ENCODE measurements at regions of chr16 and their contacts with region 1.

Region 1: DNA sequence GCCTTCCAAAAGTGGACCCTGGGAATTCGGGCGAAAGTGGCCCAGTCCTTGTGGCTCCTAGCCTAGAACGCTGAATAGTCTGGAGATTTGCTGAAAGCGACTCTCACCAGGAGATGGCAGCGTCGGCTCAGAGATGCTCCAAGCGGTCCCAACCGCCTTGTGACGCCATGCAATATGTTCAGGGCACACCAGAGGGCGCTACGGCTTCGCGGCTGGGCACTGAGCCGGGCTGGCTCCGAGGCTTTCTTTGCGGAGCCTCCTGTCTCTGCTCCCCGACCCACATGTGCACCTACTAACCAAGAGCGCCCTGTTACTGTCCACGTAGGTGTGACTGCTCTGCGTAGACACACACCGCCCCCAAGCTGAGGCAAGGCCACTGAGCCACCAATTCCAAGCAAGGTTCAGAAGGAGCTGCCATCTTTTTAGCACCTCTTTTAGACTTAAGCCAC is 36.9 kb downstream of the SYCE1L start:
- DNase-seq: peak; percentile 83 to 88
- H3K4me3 ChIP-seq: no peak overlapping the region
- H3K27ac ChIP-seq: no peak overlapping the region
- H3K4me1 ChIP-seq: peaks cover 0 to 3% of the 10 kb centered on the region in 2 donors
- H3K27me3 ChIP-seq: no peaks in the 10 kb centered on the region
- CTCF ChIP-seq: peak; percentile 98 to 100 (median 100)
- POLR2A ChIP-seq: no peak

Region 2: DNA sequence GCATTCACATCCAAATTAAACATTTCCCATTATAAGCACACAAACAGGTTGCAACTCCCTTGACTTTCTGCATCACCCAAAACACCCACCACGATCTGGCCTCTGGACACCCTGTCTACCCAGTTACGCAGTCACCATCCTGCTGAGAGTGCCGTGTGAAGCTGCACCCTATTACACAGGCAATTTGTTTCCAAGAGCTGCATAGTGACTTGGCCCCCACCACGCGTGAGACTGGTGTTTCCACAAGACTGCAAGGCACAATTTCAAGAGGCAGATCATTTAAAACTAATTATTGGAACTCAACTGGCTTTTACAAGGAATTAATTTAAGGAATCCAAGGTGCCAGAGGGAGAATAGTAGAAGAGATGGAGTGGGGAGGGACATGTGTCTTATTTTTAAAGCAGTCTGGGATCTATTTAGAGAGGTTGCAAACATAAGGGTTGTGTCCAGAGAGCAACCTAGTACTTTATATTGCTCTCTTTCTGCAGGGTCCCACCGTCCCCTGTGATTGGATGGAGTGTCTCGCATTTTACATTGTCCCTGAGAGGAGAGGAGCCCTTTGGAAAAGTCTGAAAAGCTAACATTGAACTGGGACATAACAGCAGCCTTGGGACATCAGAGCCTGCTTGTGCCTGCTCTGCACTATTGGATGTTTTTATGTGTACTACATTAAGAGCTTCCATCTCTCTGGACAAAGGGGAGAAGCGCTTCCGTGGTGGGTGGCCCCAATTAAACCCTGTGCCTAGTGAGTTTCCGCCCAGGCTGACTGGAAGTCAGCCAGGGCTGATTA is 207.5 kb after region 1 on chr16:
- intact Hi-C with region 1: loop called (anchors 10 kb)
- DNase-seq: no peak
- H3K4me3 ChIP-seq: no peak overlapping the region
- H3K27ac ChIP-seq: no peak overlapping the region
- H3K4me1 ChIP-seq: no peaks in the 10 kb centered on the region
- H3K27me3 ChIP-seq: no peaks in the 10 kb centered on the region
- CTCF ChIP-seq: no peak
- POLR2A ChIP-seq: no peak

Region 3: GRCh38 chr16:77584205-77584859 is 348.2 kb after region 1 on chr16:
- intact Hi-C with region 1: loop called (anchors 2 kb)
- DNase-seq: peak; percentile 48 to 53
- H3K4me3 ChIP-seq: no peak overlapping the region
- H3K27ac ChIP-seq: no peak overlapping the region
- H3K4me1 ChIP-seq: peaks cover 11 to 12% of the 10 kb centered on the region in 2 donors
- H3K27me3 ChIP-seq: no peaks in the 10 kb centered on the region
- CTCF ChIP-seq: peak; percentile 50 to 98 (median 88)
- POLR2A ChIP-seq: no peak

Region 4: DNA sequence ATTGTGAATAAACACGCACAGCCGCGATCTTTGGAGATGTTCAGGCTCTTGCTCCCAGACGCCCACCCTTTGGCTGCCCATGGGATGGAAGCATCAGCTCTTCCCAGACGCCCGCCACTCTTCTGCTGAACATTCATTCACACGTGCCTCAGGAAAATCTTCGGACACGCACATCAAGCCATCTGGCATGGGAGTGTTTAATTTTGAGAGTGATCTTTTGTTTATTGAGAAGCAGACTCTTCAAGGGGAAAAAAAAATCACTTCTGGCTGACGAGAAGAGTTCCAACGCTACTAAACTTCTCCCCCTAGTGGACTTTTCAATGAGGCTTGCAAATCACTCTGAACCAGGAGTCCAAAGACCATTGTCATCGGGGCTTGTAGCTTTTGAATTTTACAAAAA is 424.2 kb after region 1 on chr16:
- intact Hi-C with region 1: loop called (anchors 5 kb)
- DNase-seq: peak; percentile 7 to 28
- H3K4me3 ChIP-seq: no peak overlapping the region
- H3K27ac ChIP-seq: no peak overlapping the region
- H3K4me1 ChIP-seq: peaks cover 0 to 5% of the 10 kb centered on the region in 2 donors
- H3K27me3 ChIP-seq: no peaks in the 10 kb centered on the region
- CTCF ChIP-seq: peak in 4 of 6 experiments; percentile 51 to 80 (median 68)
- POLR2A ChIP-seq: no peak